ENCODE measurements at regions of chr2 and their contacts with region 1.

Region 1: GRCh38 chr2:74482801-74483674 is at the starts of genes CCDC142 and TTC31:
- DNase-seq: peak; percentile 76 to 96 (median 96)
- ATAC-seq: peak; percentile 96
- H3K4me3 ChIP-seq: peak within 1 kb of the TSS; percentile 99
- H3K4me3 Mint-ChIP-seq: peak within 1 kb of the TSS; percentile 91 to 100 (median 98)
- H3K27ac ChIP-seq: peak within 1 kb of the TSS; percentile 85
- H3K27ac Mint-ChIP-seq: peak within 1 kb of the TSS; percentile 93 to 100 (median 99)
- H3K4me1 ChIP-seq: peaks cover 22 to 26% of the 10 kb centered on the region in 2 donors
- H3K4me1 Mint-ChIP-seq: peaks cover 21 to 59% (median 41%) of the 10 kb centered on the region in 7 donors
- H3K27me3 ChIP-seq: no peaks in the 10 kb centered on the region
- H3K27me3 Mint-ChIP-seq: no peaks in the 10 kb centered on the region
- total RNA-seq, gene CCDC142: 21.4 to 75.2 (median 33.8) TPM
- total RNA-seq, gene TTC31: 35.5 to 50.4 (median 43.6) TPM

Region 2: GRCh38 chr2:74421221-74421870 is 61.7 kb before region 1 on chr2 and contains the starts of genes C2orf81 and WDR54:
- CTCF ChIA-PET with region 1: no interaction called
- POLR2A ChIA-PET with region 1: interaction called, 5 read pairs
- intact Hi-C with region 1: loop called (anchors 1 kb)
- DNase-seq: peak; percentile 86 to 96 (median 95)
- ATAC-seq: peak; percentile 97
- H3K4me3 ChIP-seq: peak within 1 kb of the TSS; percentile 96
- H3K4me3 Mint-ChIP-seq: peak within 1 kb of the TSS; percentile 90 to 100 (median 98)
- H3K27ac ChIP-seq: peak within 1 kb of the TSS; percentile 97
- H3K27ac Mint-ChIP-seq: peak within 1 kb of the TSS; percentile 96 to 100 (median 99)
- H3K4me1 ChIP-seq: peaks cover 4 to 19% of the 10 kb centered on the region in 2 donors
- H3K4me1 Mint-ChIP-seq: peaks cover 14 to 44% (median 36%) of the 10 kb centered on the region in 7 donors
- H3K27me3 ChIP-seq: no peaks in the 10 kb centered on the region
- H3K27me3 Mint-ChIP-seq: no peaks in the 10 kb centered on the region
- total RNA-seq, gene C2orf81: 4.3 to 10.5 (median 6.8) TPM
- total RNA-seq, gene WDR54: 26.5 to 78.5 (median 30.8) TPM

Region 3: GRCh38 chr2:74507145-74507925 is 24.3 kb after region 1 on chr2 and contains the start of gene PCGF1:
- CTCF ChIA-PET with region 1: interaction called, 6 read pairs
- POLR2A ChIA-PET with region 1: interaction called, 33 read pairs
- intact Hi-C with region 1: loop called (anchors 1 kb)
- DNase-seq: peak; percentile 97 to 99 (median 98)
- ATAC-seq: peak; percentile 96
- H3K4me3 ChIP-seq: peak within 1 kb of the TSS; percentile 96
- H3K4me3 Mint-ChIP-seq: peak within 1 kb of the TSS; percentile 95 to 100 (median 99)
- H3K27ac ChIP-seq: peak within 1 kb of the TSS; percentile 94
- H3K27ac Mint-ChIP-seq: peak within 1 kb of the TSS; percentile 97 to 100 (median 100)
- H3K4me1 ChIP-seq: peaks cover 16 to 29% of the 10 kb centered on the region in 2 donors
- H3K4me1 Mint-ChIP-seq: peaks cover 34 to 66% (median 57%) of the 10 kb centered on the region in 7 donors
- H3K27me3 ChIP-seq: peaks cover 3 to 16% of the 10 kb centered on the region in 2 donors
- H3K27me3 Mint-ChIP-seq: peaks cover 47 to 58% (median 49%) of the 10 kb centered on the region in 5 donors
- total RNA-seq, gene PCGF1: 25.7 to 37.0 (median 31.2) TPM

Region 4: GRCh38 chr2:74553892-74554645 is 71.0 kb after region 1 on chr2 and contains the start of gene LOXL3:
- CTCF ChIA-PET with region 1: interaction called, 5 read pairs
- POLR2A ChIA-PET with region 1: no interaction called
- intact Hi-C with region 1: loop called in 1 of 2 experiments (anchors 1 kb)
- DNase-seq: peak in 8 of 9 donors; percentile 63 to 87 (median 76)
- ATAC-seq: peak; percentile 67
- H3K4me3 ChIP-seq: peak within 1 kb of the TSS; percentile 70
- H3K4me3 Mint-ChIP-seq: peak within 1 kb of the TSS; percentile 85 to 96 (median 92)
- H3K27ac ChIP-seq: peak within 1 kb of the TSS; percentile 76
- H3K27ac Mint-ChIP-seq: peak within 1 kb of the TSS; percentile 62 to 95 (median 86)
- H3K4me1 ChIP-seq: peaks cover 7 to 17% of the 10 kb centered on the region in 2 donors
- H3K4me1 Mint-ChIP-seq: peaks cover 9 to 31% (median 18%) of the 10 kb centered on the region in 7 donors
- H3K27me3 ChIP-seq: peaks cover 0 to 10% of the 10 kb centered on the region in 2 donors
- H3K27me3 Mint-ChIP-seq: peaks cover 21 to 27% (median 24%) of the 10 kb centered on the region in 5 donors
- total RNA-seq, gene LOXL3: 0.50 to 6.9 (median 0.81) TPM

Region 5: GRCh38 chr2:74876081-74876886 is 393.2 kb after region 1 on chr2:
- CTCF ChIA-PET with region 1: no interaction called
- POLR2A ChIA-PET with region 1: no interaction called
- intact Hi-C with region 1: loop called in 1 of 2 experiments (anchors 1 kb)
- DNase-seq: peak in 7 of 9 donors; percentile 36 to 80 (median 76)
- ATAC-seq: peak; percentile 74
- H3K4me3 ChIP-seq: no peak overlapping the region
- H3K4me3 Mint-ChIP-seq: no peak overlapping the region
- H3K27ac ChIP-seq: no peak overlapping the region
- H3K27ac Mint-ChIP-seq: peak overlapping the region in 6 of 9 donors; percentile 20 to 78 (median 62)
- H3K4me1 ChIP-seq: peaks cover 0 to 3% of the 10 kb centered on the region in 2 donors
- H3K4me1 Mint-ChIP-seq: peaks cover 3 to 14% (median 6%) of the 10 kb centered on the region in 7 donors
- H3K27me3 ChIP-seq: no peaks in the 10 kb centered on the region
- H3K27me3 Mint-ChIP-seq: no peaks in the 10 kb centered on the region

Measured in naive thymus-derived CD4-positive, alpha-beta T cell (primary cell).